ENCODE measurements at regions of chr9 and their contacts with region 1.

Region 1: DNA sequence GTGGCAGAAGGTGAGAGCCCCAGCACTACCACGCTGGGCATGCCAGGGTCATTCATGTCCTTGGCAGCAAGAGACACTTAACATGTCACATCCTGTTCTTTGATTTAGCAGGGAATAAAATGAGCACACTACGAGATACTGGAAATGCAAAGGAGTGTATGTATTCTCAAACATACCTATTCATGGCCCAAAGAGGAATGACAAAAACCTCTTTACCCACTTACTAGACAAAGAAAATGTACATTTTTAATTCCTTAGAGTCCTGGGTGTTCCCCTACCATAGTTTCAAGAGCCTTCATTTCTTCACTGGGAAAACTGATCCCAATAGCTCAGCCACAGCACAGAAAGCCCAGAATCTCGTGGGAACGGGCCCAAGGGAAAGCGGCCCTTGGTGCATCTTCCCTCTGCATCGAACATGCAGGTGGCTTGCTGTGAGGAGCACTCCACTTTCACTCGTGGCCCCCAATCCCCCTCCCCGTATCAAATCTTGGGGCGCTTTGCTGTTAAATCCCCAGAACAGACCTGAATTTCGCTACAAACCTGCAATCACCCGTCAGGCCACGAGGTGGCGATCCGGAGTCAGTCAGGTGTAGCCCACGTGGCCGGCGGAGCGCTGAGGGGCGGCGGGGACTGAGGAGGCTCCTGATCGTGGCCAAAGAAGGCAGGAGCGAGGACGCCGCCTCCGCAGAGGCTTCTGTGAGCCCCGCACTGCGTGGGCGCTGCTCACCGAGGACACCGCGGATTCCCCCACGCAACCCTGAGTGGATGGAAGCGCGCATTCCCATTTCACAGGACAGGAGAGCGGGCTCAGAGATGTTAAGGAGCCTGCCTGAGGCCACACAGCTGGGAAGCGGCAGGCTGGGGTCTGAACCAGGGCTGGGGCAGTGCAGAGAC is 91.4 kb downstream of the LMX1B start:
- DNase-seq: peak; percentile 89
- H3K4me3 Mint-ChIP-seq: peak overlapping the region; percentile 44
- H3K27ac Mint-ChIP-seq: no peak overlapping the region
- H3K4me1 Mint-ChIP-seq: peaks cover 18% of the 10 kb centered on the region
- H3K27me3 Mint-ChIP-seq: peaks cover 28% of the 10 kb centered on the region

Region 2: GRCh38 chr9:126676685-126677143 is 28.4 kb before region 1 on chr9:
- CTCF ChIA-PET with region 1: interaction called, 13 read pairs
- POLR2A ChIA-PET with region 1: no interaction called
- intact Hi-C with region 1: no loop called
- DNase-seq: no peak
- H3K4me3 Mint-ChIP-seq: no peak overlapping the region
- H3K27ac Mint-ChIP-seq: no peak overlapping the region
- H3K4me1 Mint-ChIP-seq: peaks cover 7% of the 10 kb centered on the region
- H3K27me3 Mint-ChIP-seq: peaks cover 72% of the 10 kb centered on the region

Region 3: DNA sequence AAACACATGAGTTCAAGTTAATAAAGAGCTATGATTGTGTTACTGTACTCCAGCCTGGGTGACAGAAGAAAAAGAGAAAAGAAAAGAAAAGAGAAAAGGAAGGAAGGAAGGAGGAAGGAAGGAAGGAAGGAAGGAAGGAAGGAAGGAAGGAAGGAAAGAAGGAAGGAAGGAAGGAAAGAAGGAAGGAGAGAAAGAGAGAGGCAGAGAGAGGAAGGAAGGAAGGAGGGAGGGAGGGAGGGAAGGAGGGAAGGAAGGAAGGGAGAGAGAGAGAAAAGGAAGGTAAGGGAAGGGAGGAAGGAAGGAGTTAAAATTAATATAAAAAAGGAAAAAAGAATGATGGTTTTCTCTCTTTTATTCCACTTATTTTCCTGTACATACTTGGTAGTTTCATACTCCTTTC is 10.3 kb after region 1 on chr9:
- CTCF ChIA-PET with region 1: interaction called, 56 read pairs
- POLR2A ChIA-PET with region 1: no interaction called
- intact Hi-C with region 1: no loop called
- DNase-seq: no peak
- H3K4me3 Mint-ChIP-seq: no peak overlapping the region
- H3K27ac Mint-ChIP-seq: no peak overlapping the region
- H3K4me1 Mint-ChIP-seq: peaks cover 13% of the 10 kb centered on the region
- H3K27me3 Mint-ChIP-seq: peaks cover 3% of the 10 kb centered on the region

Region 4: GRCh38 chr9:126735482-126735881 is 30.4 kb after region 1 on chr9:
- CTCF ChIA-PET with region 1: interaction called, 10 read pairs
- POLR2A ChIA-PET with region 1: no interaction called
- intact Hi-C with region 1: no loop called
- DNase-seq: no peak
- H3K4me3 Mint-ChIP-seq: no peak overlapping the region
- H3K27ac Mint-ChIP-seq: no peak overlapping the region
- H3K4me1 Mint-ChIP-seq: no peaks in the 10 kb centered on the region
- H3K27me3 Mint-ChIP-seq: no peaks in the 10 kb centered on the region

Region 5: DNA sequence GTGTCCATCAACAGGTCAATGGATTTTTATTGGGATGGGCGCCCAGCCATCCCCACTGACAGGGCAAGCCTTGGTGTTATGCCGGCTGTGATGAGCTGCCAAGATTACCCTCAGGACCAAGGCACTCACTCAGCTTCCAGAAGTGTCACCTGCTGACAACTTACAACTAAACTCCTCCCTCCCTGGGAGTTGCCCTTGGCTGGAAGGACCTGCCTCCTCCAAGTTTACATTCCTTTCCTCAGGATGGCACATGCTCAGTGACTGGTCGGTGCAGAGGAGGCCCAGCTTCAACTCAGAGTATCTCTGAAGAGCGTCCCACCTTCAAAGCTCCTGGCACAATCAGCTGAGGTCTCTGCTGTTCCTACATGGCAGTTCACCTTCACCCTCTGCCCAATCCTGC is 47.3 kb after region 1 on chr9:
- CTCF ChIA-PET with region 1: interaction called, 17 read pairs
- POLR2A ChIA-PET with region 1: no interaction called
- intact Hi-C with region 1: loop called (anchors 5 kb)
- DNase-seq: no peak
- H3K4me3 Mint-ChIP-seq: no peak overlapping the region
- H3K27ac Mint-ChIP-seq: no peak overlapping the region
- H3K4me1 Mint-ChIP-seq: peaks cover 15% of the 10 kb centered on the region
- H3K27me3 Mint-ChIP-seq: peaks cover 3% of the 10 kb centered on the region

Region 6: DNA sequence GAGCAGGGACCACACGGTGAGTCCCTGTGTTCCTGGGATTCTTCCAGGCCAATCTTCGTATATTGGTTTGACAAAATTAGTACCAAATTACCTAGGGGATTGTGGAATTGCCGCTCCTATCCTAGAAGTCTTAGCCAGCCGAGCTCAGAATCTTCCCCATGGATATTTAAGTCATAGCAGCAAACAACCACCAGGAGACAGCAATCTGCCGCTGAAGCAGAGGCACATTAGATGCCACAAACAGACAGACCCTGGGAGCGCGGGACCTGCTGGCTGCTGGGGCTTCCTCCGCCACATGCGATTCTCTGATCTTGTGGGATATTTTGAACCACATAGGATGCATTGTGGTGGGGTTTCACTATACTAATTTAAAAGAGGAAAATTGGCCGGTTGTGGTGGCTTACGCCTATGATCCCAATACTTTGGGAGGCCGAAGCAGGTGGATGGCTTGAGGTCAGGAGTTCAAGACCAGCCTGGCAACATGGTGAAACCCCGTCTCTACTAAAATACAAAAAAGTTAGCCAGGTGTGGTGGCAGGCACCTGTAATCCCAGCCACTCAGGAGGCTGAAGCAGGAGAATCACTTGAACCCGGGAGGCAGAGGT is 68.0 kb after region 1 on chr9:
- CTCF ChIA-PET with region 1: interaction called, 447 read pairs
- POLR2A ChIA-PET with region 1: no interaction called
- intact Hi-C with region 1: no loop called
- DNase-seq: peak; percentile 21
- H3K4me3 Mint-ChIP-seq: no peak overlapping the region
- H3K27ac Mint-ChIP-seq: no peak overlapping the region
- H3K4me1 Mint-ChIP-seq: no peaks in the 10 kb centered on the region
- H3K27me3 Mint-ChIP-seq: peaks cover 14% of the 10 kb centered on the region

Region 7: GRCh38 chr9:126791406-126792151 is 86.5 kb after region 1 on chr9:
- CTCF ChIA-PET with region 1: interaction called, 447 read pairs
- POLR2A ChIA-PET with region 1: no interaction called
- intact Hi-C with region 1: no loop called
- DNase-seq: no peak
- H3K4me3 Mint-ChIP-seq: no peak overlapping the region
- H3K27ac Mint-ChIP-seq: no peak overlapping the region
- H3K4me1 Mint-ChIP-seq: peaks cover 4% of the 10 kb centered on the region
- H3K27me3 Mint-ChIP-seq: peaks cover 34% of the 10 kb centered on the region